Cardiac septum (tissue), 1 donor: ENCODE measurements at regions of chr11 and their contacts with region 1.

Region 1: GRCh38 chr11:22666688-22667439 is 453 bp downstream of the GAS2 start:
- DNase-seq: peak; percentile 76

Region 2: DNA sequence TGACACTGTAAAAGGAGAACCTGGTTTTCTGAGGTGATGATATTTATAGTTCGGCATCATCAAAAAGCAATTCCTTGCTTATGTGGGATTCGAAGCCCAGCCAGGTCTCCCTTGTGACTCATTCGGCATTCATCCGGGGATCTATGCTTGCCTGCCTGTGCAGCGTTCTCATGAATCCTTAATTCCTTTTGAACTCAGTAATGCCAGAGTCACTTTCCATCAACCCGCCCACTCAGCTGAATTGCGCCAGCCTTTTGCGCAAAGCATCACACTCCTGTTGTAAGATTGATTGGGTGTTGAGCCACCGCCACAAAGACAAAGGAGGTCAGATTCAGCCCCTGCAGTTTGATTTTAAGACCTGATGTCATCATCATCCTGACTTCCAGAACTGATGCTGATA is 200.1 kb before region 1 on chr11:
- intact Hi-C with region 1: no loop called
- DNase-seq: no peak

Region 3: GRCh38 chr11:22625448-22626287 is 41.2 kb before region 1 on chr11 and contains the start of gene FANCF:
- intact Hi-C with region 1: loop called (anchors 5 kb)
- DNase-seq: peak; percentile 95
- total RNA-seq, gene FANCF: 6.1 TPM

Region 4: DNA sequence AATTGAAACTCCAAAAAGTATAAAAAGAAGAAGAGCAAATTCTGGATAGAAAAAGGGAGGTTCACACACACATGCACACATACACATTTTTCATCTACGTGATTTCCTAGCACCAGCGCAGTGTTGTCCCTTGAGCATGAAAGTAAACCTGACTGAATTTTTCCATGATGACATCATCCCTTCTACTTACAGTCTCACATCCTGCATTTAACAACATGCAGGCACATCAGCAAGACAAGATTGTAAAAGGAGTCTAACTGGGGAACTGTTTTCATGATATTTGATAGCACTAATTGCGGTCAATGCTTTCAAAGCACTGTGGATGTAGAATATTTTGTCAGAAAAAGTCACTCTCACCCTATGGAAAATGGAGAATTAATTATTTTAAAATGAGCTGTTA is 36.2 kb after region 1 on chr11:
- intact Hi-C with region 1: loop called (anchors 5 kb)
- DNase-seq: no peak

Region 5: DNA sequence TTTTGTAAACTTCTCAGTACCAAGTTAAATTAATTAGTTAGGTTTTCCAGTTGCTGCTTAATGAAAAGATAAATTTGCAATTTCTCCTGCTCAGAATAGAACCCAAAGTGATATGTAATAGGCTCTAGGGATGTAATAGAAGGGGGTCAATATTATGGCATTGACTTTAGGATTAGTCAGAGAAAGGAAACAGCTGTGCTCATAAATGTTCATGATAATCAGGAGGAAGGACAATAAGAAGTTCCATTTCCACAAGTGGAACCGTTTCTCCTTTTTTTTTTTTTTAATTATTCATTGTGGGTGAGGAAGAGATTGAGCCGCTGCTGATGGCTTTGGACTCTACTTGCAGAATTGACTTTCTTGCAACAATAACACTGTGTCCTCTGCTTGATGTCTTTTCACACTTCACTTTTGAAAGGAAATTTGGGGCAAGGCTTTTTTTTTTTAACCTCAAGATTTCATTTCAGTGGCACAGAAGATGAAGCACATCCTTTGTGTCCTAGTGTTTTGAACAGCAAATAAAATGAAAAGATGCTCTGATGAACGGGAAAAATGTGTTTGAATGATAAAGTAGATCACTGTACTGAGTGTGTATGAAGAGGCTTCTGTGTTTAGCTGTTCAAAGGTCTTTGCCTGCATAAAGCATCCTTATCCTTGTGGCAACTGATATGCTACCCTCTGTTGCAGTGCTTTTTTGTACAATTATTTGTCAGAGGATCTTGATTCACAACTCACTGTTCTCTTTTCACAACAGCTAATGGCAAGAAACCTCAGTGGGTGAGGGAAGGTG is 61.9 kb after region 1 on chr11:
- intact Hi-C with region 1: loop called (anchors 5 kb)
- DNase-seq: no peak

Region 6: GRCh38 chr11:22787551-22788162 is 120.8 kb after region 1 on chr11:
- intact Hi-C with region 1: loop called (anchors 10 kb)
- DNase-seq: no peak